Caco-2 (cell line): ENCODE measurements at regions of chr6 and their contacts with region 1.

Region 1: GRCh38 chr6:1552296-1552761 is 57.4 kb upstream of the FOXC1 start:
- DNase-seq: no peak
- H3K4me3 ChIP-seq: no peak overlapping the region
- H3K4me3 Mint-ChIP-seq: no peak overlapping the region
- H3K27ac Mint-ChIP-seq: no peak overlapping the region
- H3K4me1 ChIP-seq: no peaks in the 10 kb centered on the region
- H3K4me1 Mint-ChIP-seq: no peaks in the 10 kb centered on the region
- H3K27me3 ChIP-seq: no peaks in the 10 kb centered on the region
- H3K27me3 Mint-ChIP-seq: peaks cover 4% of the 10 kb centered on the region
- CTCF ChIP-seq: peak in 1 of 2 experiments; percentile 29

Region 2: DNA sequence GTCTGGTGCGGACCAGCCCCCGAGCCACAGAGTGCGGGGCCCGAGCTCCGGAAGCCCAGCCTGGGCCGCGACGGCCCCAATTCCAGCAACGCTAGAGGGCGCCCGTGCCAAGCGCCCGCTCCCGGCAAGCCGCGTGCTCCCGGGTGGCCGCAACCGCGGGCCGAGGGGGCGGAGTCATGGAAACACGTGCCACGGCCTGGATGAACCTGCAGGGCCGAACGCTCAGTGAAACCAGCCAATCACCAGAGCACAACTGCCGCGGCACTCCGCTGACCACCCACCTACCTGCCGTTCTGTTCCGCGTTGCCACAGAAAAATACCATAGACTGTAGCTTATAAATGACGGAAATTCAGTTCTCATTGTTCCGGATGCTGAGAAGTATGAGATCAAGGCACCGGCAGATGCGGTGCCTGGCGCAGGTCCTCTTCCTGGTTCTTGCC is 28.3 kb before region 1 on chr6:
- CTCF ChIA-PET with region 1: interaction called, 13 read pairs
- POLR2A ChIA-PET with region 1: no interaction called
- intact Hi-C with region 1: loop called (anchors 1 kb)
- DNase-seq: peak; percentile 92 to 95
- H3K4me3 ChIP-seq: peak overlapping the region; percentile 37
- H3K4me3 Mint-ChIP-seq: peak overlapping the region; percentile 83
- H3K27ac Mint-ChIP-seq: peak overlapping the region; percentile 95
- H3K4me1 ChIP-seq: no peaks in the 10 kb centered on the region
- H3K4me1 Mint-ChIP-seq: no peaks in the 10 kb centered on the region
- H3K27me3 ChIP-seq: no peaks in the 10 kb centered on the region
- H3K27me3 Mint-ChIP-seq: peaks cover 20% of the 10 kb centered on the region
- CTCF ChIP-seq: peak; percentile 86 to 87